IMR-90 (cell line): ENCODE measurements at regions of chr3 and their contacts with region 1.

Region 1: DNA sequence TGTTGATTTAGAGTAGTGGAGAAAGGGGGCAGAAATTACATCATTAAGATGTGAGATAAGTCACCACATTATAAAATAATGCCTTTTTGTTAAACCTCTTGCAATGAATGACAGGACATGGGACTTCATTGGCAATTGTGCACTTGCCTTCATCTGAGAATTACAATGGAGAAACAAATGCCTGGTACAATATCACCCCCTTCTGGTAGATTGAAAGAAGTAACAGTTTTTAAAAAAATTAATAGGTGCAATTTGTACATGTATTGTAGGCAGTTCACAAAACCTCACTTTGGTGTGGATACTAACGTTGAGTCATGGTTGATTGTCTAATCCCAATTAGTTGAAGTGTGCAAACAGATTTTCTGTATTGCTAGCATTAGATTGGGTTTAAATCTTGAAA is 4.6 kb upstream of the P2RY14 start:
- DNase-seq: peak; percentile 83
- ATAC-seq: peak; percentile 37; the same call in 1 of the 2 replicates
- H3K4me3 ChIP-seq: no peak overlapping the region
- H3K27ac ChIP-seq: no peak overlapping the region
- H3K4me1 ChIP-seq: peaks cover 5% of the 10 kb centered on the region; the same call in 1 of the 2 replicates
- H3K27me3 ChIP-seq: no peaks in the 10 kb centered on the region
- CTCF ChIP-seq: peak; percentile 78
- POLR2A ChIP-seq: no peak
- RAD21 ChIP-seq: peak; percentile 92

Region 2: GRCh38 chr3:150763122-150763841 is 519.6 kb before region 1 on chr3 and contains the start of gene SIAH2:
- CTCF ChIA-PET with region 1: no interaction called
- POLR2A ChIA-PET with region 1: no interaction called
- dilution Hi-C with region 1: no loop called
- in situ Hi-C with region 1: no loop called
- intact Hi-C with region 1: loop called (anchors 10 kb)
- DNase-seq: peak; percentile 93
- ATAC-seq: peak; percentile 87
- H3K4me3 ChIP-seq: peak within 1 kb of the TSS; percentile 98
- H3K27ac ChIP-seq: peak within 1 kb of the TSS; percentile 94
- H3K4me1 ChIP-seq: peaks cover 9% of the 10 kb centered on the region; the same call in 1 of the 2 replicates
- H3K27me3 ChIP-seq: no peaks in the 10 kb centered on the region
- CTCF ChIP-seq: peak; percentile 11; the same call in 1 of the 2 replicates
- POLR2A ChIP-seq: peak; percentile 87
- RAD21 ChIP-seq: no peak
- total RNA-seq, gene SIAH2: 24.7 and 26.1 TPM in 2 replicates

Region 3: DNA sequence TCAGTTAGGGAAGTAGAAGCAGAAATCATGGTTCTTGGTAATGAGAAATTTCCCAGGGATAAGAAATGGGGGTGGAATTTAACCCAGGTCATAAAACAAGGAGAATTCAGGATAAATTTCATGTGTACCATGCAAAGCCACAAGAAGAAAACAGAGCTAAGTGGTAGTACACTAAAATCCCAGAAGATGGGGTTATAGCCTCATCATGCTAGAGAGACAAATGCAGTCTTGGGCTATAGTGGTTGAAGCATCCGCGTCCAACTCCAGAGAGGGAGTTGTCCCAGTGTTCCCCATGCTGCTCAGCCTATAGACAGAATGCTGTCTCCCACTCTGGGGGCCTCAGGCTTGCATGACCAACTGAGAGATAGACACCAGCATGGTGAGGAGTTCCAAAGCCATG is 274.2 kb before region 1 on chr3:
- CTCF ChIA-PET with region 1: interaction called, 3 read pairs
- POLR2A ChIA-PET with region 1: no interaction called
- dilution Hi-C with region 1: no loop called
- in situ Hi-C with region 1: no loop called
- intact Hi-C with region 1: loop called (anchors 5 kb)
- DNase-seq: peak; percentile 66
- ATAC-seq: peak; percentile 92
- H3K4me3 ChIP-seq: no peak overlapping the region
- H3K27ac ChIP-seq: no peak overlapping the region
- H3K4me1 ChIP-seq: no peaks in the 10 kb centered on the region
- H3K27me3 ChIP-seq: peaks cover 14% of the 10 kb centered on the region
- CTCF ChIP-seq: peak; percentile 65
- POLR2A ChIP-seq: no peak
- RAD21 ChIP-seq: peak; percentile 74

Region 4: GRCh38 chr3:151156618-151157216 is 126.2 kb before region 1 on chr3:
- CTCF ChIA-PET with region 1: interaction called, 4 read pairs
- POLR2A ChIA-PET with region 1: no interaction called
- dilution Hi-C with region 1: no loop called
- in situ Hi-C with region 1: no loop called
- intact Hi-C with region 1: loop called (anchors 1 kb)
- DNase-seq: peak; percentile 61
- ATAC-seq: peak; percentile 73
- H3K4me3 ChIP-seq: no peak overlapping the region
- H3K27ac ChIP-seq: no peak overlapping the region
- H3K4me1 ChIP-seq: peaks cover 1% of the 10 kb centered on the region; the same call in 1 of the 2 replicates
- H3K27me3 ChIP-seq: peaks cover 1% of the 10 kb centered on the region; the same call in 1 of the 2 replicates
- CTCF ChIP-seq: peak; percentile 47
- POLR2A ChIP-seq: no peak
- RAD21 ChIP-seq: 0 out of 2 replicates have a peak, but pooled peaks have one; percentile 26

Region 5: GRCh38 chr3:151168269-151169094 is 114.4 kb before region 1 on chr3:
- CTCF ChIA-PET with region 1: interaction called, 14 read pairs
- POLR2A ChIA-PET with region 1: no interaction called
- dilution Hi-C with region 1: no loop called
- in situ Hi-C with region 1: loop called (anchors 5 kb)
- intact Hi-C with region 1: loop called (anchors 1 kb)
- DNase-seq: peak; percentile 67
- ATAC-seq: peak; percentile 90
- H3K4me3 ChIP-seq: no peak overlapping the region
- H3K27ac ChIP-seq: no peak overlapping the region
- H3K4me1 ChIP-seq: no peaks in the 10 kb centered on the region
- H3K27me3 ChIP-seq: no peaks in the 10 kb centered on the region
- CTCF ChIP-seq: peak; percentile 84
- POLR2A ChIP-seq: no peak
- RAD21 ChIP-seq: peak; percentile 93

Region 6: GRCh38 chr3:151227807-151228665 is 54.9 kb before region 1 on chr3:
- CTCF ChIA-PET with region 1: interaction called, 32 read pairs
- POLR2A ChIA-PET with region 1: no interaction called
- dilution Hi-C with region 1: no loop called
- in situ Hi-C with region 1: loop called (anchors 5 kb)
- intact Hi-C with region 1: loop called (anchors 1 kb)
- DNase-seq: peak; percentile 95
- ATAC-seq: peak; percentile 79
- H3K4me3 ChIP-seq: no peak overlapping the region
- H3K27ac ChIP-seq: peak overlapping the region; percentile 66
- H3K4me1 ChIP-seq: peaks cover 21% of the 10 kb centered on the region
- H3K27me3 ChIP-seq: no peaks in the 10 kb centered on the region
- CTCF ChIP-seq: peak; percentile 96
- POLR2A ChIP-seq: peak; percentile 67
- RAD21 ChIP-seq: peak; percentile 98